Activated CD4-positive, alpha-beta T cell treated with anti-CD3 and anti-CD28 coated beads for 36 hours (primary cell): ENCODE measurements at regions of chr5 and their contacts with region 1.

Region 1: GRCh38 chr5:55134053-55134722 is 25.8 kb upstream of the GPX8 start:
- DNase-seq: peak; percentile 15
- ATAC-seq: peak; percentile 60
- H3K4me3 Mint-ChIP-seq: no peak overlapping the region
- H3K27ac Mint-ChIP-seq: no peak overlapping the region
- H3K4me1 Mint-ChIP-seq: peaks cover 14% of the 10 kb centered on the region
- H3K27me3 Mint-ChIP-seq: peaks cover 4% of the 10 kb centered on the region

Region 2: GRCh38 chr5:55146543-55147151 is 12.5 kb after region 1 on chr5:
- CTCF ChIA-PET with region 1: interaction called, 13 read pairs
- POLR2A ChIA-PET with region 1: no interaction called
- intact Hi-C with region 1: no loop called
- DNase-seq: peak; percentile 88
- ATAC-seq: peak; percentile 95
- H3K4me3 Mint-ChIP-seq: no peak overlapping the region
- H3K27ac Mint-ChIP-seq: no peak overlapping the region
- H3K4me1 Mint-ChIP-seq: peaks cover 15% of the 10 kb centered on the region
- H3K27me3 Mint-ChIP-seq: peaks cover 15% of the 10 kb centered on the region